OCI-LY7 (cell line): ENCODE measurements at regions of chr15 and their contacts with region 1.

Region 1: GRCh38 chr15:69058830-69059556 is 44.5 kb downstream of the NOX5 start:
- DNase-seq: peak; percentile 83
- H3K4me3 ChIP-seq: no peak overlapping the region
- H3K27ac ChIP-seq: no peak overlapping the region
- H3K4me1 ChIP-seq: peaks cover 37% of the 10 kb centered on the region
- CTCF ChIP-seq: peak; percentile 97

Region 2: DNA sequence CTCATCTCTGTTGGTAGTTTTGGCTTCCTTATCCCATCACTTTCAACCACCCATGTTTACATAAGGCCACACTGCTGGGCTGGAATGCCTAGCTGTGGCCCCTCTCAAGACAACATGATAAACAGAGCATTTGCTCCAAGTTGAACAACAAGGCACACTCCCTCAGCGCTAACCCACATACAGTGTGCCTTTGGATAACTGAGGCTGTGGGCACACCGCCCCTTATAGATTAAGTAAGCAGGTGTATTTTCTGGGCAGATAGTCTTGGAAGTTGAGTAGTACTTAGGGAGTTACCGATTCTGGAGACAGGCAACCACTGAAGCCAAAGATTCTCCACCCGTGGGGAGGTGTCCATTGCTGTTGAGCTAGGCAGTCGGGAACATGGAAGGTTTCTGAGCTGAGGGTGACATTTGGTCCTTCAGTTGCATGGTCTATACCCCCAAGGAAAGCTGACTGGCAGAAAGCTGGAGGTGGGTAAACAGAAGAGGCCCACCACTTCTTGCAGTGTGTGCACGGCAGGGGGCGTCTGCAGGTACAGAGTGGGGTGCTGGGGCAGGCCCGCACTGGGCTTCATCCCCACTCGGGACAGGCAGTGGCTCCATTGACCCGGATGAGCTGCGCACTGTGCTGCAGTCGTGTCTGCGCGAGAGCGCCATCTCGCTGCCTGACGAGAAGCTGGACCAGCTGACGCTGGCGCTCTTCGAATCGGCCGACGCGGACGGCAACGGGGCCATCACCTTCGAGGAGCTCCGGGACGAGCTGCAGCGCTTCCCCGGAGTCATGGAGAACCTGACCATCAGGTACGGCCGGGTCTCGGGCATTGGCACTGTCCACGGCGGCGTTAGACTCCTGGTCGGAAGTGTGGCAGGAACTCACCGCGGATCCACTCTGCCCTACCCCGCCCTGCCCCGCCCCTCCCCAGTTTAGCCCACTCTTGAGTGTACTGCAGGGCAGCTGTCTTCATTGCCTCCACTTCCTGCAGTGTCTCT is 27.7 kb before region 1 on chr15:
- CTCF ChIA-PET with region 1: no interaction called
- POLR2A ChIA-PET with region 1: no interaction called
- intact Hi-C with region 1: no loop called
- DNase-seq: no peak
- H3K4me3 ChIP-seq: no peak overlapping the region
- H3K27ac ChIP-seq: no peak overlapping the region
- H3K4me1 ChIP-seq: no peaks in the 10 kb centered on the region
- CTCF ChIP-seq: no peak

Region 3: DNA sequence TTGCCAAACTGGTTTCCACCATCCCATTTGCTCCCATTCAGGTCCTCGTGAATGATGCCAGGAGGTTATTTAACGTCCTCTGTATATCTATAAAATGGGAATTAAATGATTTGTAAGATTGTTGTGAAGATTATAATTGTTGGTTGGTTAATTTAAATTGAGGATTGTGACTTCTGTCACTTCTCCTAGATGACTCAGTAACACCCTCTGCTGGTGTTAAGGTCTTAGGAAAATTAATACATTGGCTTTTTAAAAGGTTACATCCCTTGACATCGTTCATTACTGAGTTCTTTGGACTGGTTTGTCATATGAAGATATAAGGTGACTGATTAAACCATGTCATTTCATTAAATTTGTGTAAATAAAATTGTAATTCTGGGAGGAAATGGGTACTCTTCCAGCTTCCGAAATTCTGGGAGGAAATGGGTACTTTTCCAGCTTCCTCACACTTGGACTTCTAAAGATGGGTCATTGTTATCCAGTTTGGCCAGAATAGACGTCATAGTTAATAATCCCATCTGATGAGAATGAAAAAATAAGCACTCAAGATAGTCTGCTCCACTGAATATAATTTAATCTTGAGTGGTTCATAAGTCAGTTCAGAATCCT is 206.5 kb after region 1 on chr15:
- CTCF ChIA-PET with region 1: no interaction called
- POLR2A ChIA-PET with region 1: no interaction called
- intact Hi-C with region 1: loop called (anchors 2 kb)
- DNase-seq: peak; percentile 47
- H3K4me3 ChIP-seq: no peak overlapping the region
- H3K27ac ChIP-seq: no peak overlapping the region
- H3K4me1 ChIP-seq: no peaks in the 10 kb centered on the region
- CTCF ChIP-seq: peak; percentile 85

Region 4: DNA sequence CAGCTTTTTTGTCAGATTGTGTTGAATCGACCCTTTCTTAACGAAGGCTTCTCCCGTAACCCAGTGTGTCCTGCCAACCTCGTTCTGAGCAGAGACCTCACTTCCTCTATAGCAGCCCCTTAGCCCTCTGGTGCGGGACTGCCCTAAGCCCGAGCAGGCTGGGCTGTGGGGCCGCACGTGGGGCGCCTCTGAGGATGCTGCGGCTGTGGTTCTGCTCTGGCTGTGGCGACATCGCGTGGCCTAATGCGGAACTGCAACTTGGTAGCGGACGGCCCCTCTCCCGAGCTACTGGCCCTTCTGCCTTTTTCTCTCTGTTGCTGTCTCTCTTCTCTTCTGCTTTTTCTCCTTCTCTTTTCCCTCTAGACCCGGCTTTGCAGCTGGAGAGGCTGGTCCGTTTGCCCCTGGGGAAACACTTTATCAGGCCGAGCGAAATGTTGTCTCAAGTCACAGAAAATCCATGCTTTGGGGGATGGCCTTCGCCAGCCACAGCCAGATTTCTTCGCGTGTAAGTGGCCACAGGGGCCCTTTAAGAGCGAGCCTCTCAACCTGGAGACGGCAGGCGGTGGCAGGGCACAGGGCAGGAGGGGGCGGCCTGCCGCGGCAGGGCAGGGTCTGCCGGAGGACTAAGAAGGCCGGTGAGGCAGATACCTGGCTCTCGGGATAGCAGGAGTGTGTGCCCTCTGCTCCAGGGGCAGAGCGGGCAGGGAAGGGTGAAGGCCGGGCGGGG is 335.7 kb after region 1 on chr15:
- CTCF ChIA-PET with region 1: interaction called, 4 read pairs
- POLR2A ChIA-PET with region 1: no interaction called
- intact Hi-C with region 1: loop called (anchors 1 kb)
- DNase-seq: peak; percentile 83
- H3K4me3 ChIP-seq: no peak overlapping the region
- H3K27ac ChIP-seq: no peak overlapping the region
- H3K4me1 ChIP-seq: peaks cover 5% of the 10 kb centered on the region
- CTCF ChIP-seq: peak; percentile 94